HepG2 (cell line): ENCODE measurements at regions of chr11 and their contacts with region 1.

Region 1: DNA sequence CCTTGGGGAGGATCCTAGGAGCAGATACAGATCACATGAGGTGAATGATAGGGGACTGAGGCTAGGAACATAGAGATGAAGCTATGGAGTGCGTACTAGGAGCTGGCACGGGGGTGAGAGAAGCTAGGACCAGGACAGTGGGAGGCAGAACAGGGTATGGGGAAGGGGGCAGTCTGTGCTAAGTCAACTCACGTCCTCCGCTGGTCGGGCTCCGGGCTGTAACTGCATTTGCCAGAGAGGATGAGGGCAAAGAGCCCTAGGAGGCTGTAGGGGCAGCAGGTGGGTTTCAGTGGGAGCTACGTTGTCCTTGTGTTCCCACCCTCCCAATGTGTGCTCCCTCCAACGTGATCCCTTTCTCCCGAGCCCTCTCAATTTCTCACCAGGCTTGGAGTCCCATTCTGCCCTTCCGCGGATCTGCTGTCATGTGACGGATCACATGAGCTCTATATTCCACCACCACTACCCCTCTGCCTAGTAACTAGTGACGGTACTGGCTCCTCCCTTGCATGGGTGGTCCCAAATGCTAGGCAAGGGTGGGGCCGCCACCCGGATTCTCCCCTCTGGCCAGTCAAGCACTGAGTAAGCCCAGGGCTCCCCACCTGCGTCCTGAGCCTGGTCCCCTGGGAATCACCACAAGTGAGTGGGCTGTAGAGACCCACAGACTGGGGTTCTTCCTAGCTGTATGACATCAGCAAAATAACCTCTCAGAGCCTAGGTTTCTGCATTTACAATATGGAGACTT is at the start of gene TPP1:
- DNase-seq: peak; percentile 91
- ATAC-seq: peak; percentile 93
- H3K4me3 ChIP-seq: peak within 1 kb of the TSS; percentile 67 to 94 (median 88)
- H3K27ac ChIP-seq: peak within 1 kb of the TSS; percentile 58
- H3K4me1 ChIP-seq: peaks cover 28% of the 10 kb centered on the region
- H3K27me3 ChIP-seq: peaks cover 12 to 40% of the 10 kb centered on the region in 2 experiments; a peak in 4 of 5 replicates
- CTCF ChIP-seq: peak; percentile 18; the same call in 1 of the 2 replicates
- EP300 ChIP-seq: peak in 1 of 2 experiments; percentile 50; a peak in 1 of 4 replicates
- POLR2A ChIP-seq: peak; percentile 81 to 88
- RAD21 ChIP-seq: no peak
- total RNA-seq, gene TPP1: 13.9 and 14.4 TPM in 2 replicates

Region 2: DNA sequence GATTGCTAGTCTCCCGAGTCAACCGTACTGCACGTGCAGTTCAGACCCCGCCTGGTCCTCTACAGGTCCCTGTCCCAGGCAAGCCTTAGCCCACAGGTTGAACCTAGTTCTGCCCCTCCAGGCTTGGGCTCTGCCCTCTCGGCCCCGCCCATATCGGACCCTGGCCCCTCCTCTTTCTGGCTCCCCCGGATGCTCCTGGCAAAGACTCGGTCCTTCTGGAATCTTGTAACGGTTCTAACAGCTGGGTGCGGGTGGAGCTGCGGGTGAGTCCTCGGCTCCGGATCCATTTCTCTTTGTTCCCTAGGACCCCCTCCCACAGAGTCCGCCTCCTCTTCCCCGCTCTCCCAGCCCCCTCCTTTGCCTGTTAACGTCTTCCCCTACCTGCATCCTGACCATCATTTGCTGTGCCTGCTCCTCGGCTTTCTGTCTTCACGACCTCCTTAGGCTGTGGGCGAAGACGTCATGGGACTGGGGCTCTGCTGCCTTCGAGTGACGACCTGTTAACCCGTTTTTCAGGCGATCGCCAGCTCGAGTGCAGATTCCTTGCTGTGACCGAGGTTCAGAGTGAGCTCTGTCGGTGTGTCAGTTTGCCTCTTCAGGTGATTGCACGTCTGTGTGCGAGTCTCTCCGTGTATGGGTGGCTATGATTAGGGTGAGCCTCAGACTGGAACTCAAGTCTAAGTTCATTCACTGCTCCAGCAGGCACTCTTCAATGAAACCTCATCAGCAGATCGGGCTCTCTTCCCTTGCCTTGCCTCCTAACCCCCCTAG is 121.9 kb before region 1 on chr11 and contains the start of gene DNHD1:
- CTCF ChIA-PET with region 1: no interaction called
- POLR2A ChIA-PET with region 1: no interaction called
- in situ Hi-C with region 1: no loop called
- intact Hi-C with region 1: no loop called
- DNase-seq: no peak
- ATAC-seq: no peak
- H3K4me3 ChIP-seq: no peak within 1 kb of the TSS
- H3K27ac ChIP-seq: no peak within 1 kb of the TSS
- H3K4me1 ChIP-seq: no peaks in the 10 kb centered on the region
- H3K27me3 ChIP-seq: no peaks in the 10 kb centered on the region
- CTCF ChIP-seq: no peak
- EP300 ChIP-seq: no peak
- POLR2A ChIP-seq: no peak
- RAD21 ChIP-seq: no peak
- total RNA-seq, gene DNHD1: 0.94 and 2.7 TPM in 2 replicates

Region 3: GRCh38 chr11:6635082-6635932 is 16.1 kb after region 1 on chr11:
- CTCF ChIA-PET with region 1: no interaction called
- POLR2A ChIA-PET with region 1: interaction called, 12 read pairs
- in situ Hi-C with region 1: no loop called
- intact Hi-C with region 1: no loop called
- DNase-seq: peak; percentile 40
- ATAC-seq: peak; percentile 56
- H3K4me3 ChIP-seq: peak overlapping the region in 1 of 3 experiments; percentile 44; a peak in 2 of 6 replicates
- H3K27ac ChIP-seq: peak overlapping the region; percentile 45
- H3K4me1 ChIP-seq: peaks cover 50% of the 10 kb centered on the region
- H3K27me3 ChIP-seq: peaks cover 7 to 52% of the 10 kb centered on the region in 2 experiments; a peak in 3 of 5 replicates
- CTCF ChIP-seq: no peak
- EP300 ChIP-seq: no peak
- POLR2A ChIP-seq: no peak
- RAD21 ChIP-seq: no peak

Region 4: GRCh38 chr11:6646918-6647679 is 27.9 kb after region 1 on chr11:
- CTCF ChIA-PET with region 1: no interaction called
- POLR2A ChIA-PET with region 1: interaction called, 3 read pairs
- in situ Hi-C with region 1: no loop called
- intact Hi-C with region 1: loop called (anchors 1 kb)
- DNase-seq: no peak
- ATAC-seq: no peak
- H3K4me3 ChIP-seq: no peak overlapping the region
- H3K27ac ChIP-seq: no peak overlapping the region
- H3K4me1 ChIP-seq: no peaks in the 10 kb centered on the region
- H3K27me3 ChIP-seq: peaks cover 3 to 99% of the 10 kb centered on the region in 2 experiments; a peak in 4 of 5 replicates
- CTCF ChIP-seq: no peak
- EP300 ChIP-seq: no peak
- POLR2A ChIP-seq: no peak
- RAD21 ChIP-seq: no peak